Colonic mucosa (tissue), 4 donors: ENCODE measurements at regions of chr6 and their contacts with region 1.

Region 1: GRCh38 chr6:139375232-139376016 is 976 bp upstream of the CITED2 start:
- DNase-seq: peak; percentile 94
- H3K4me3 ChIP-seq: peak overlapping the region; percentile 70
- H3K27ac ChIP-seq: peak overlapping the region; percentile 97
- H3K4me1 ChIP-seq: peaks cover 10% of the 10 kb centered on the region
- H3K27me3 ChIP-seq: no peaks in the 10 kb centered on the region
- CTCF ChIP-seq: no peak

Region 2: GRCh38 chr6:138844192-138844591 is 531.2 kb before region 1 on chr6:
- intact Hi-C with region 1: no loop called
- DNase-seq: no peak
- H3K4me3 ChIP-seq: no peak overlapping the region
- H3K27ac ChIP-seq: no peak overlapping the region
- H3K4me1 ChIP-seq: no peaks in the 10 kb centered on the region
- H3K27me3 ChIP-seq: no peaks in the 10 kb centered on the region
- CTCF ChIP-seq: no peak

Region 3: GRCh38 chr6:139313784-139314545 is 61.5 kb before region 1 on chr6:
- intact Hi-C with region 1: no loop called
- DNase-seq: no peak
- H3K4me3 ChIP-seq: no peak overlapping the region
- H3K27ac ChIP-seq: no peak overlapping the region
- H3K4me1 ChIP-seq: no peaks in the 10 kb centered on the region
- H3K27me3 ChIP-seq: no peaks in the 10 kb centered on the region
- CTCF ChIP-seq: no peak

Region 4: GRCh38 chr6:139533573-139534471 is 158.4 kb after region 1 on chr6:
- intact Hi-C with region 1: loop called (anchors 5 kb)
- DNase-seq: peak; percentile 81
- H3K4me3 ChIP-seq: no peak overlapping the region
- H3K27ac ChIP-seq: peak overlapping the region; percentile 75
- H3K4me1 ChIP-seq: peaks cover 16% of the 10 kb centered on the region
- H3K27me3 ChIP-seq: no peaks in the 10 kb centered on the region
- CTCF ChIP-seq: no peak

Region 5: DNA sequence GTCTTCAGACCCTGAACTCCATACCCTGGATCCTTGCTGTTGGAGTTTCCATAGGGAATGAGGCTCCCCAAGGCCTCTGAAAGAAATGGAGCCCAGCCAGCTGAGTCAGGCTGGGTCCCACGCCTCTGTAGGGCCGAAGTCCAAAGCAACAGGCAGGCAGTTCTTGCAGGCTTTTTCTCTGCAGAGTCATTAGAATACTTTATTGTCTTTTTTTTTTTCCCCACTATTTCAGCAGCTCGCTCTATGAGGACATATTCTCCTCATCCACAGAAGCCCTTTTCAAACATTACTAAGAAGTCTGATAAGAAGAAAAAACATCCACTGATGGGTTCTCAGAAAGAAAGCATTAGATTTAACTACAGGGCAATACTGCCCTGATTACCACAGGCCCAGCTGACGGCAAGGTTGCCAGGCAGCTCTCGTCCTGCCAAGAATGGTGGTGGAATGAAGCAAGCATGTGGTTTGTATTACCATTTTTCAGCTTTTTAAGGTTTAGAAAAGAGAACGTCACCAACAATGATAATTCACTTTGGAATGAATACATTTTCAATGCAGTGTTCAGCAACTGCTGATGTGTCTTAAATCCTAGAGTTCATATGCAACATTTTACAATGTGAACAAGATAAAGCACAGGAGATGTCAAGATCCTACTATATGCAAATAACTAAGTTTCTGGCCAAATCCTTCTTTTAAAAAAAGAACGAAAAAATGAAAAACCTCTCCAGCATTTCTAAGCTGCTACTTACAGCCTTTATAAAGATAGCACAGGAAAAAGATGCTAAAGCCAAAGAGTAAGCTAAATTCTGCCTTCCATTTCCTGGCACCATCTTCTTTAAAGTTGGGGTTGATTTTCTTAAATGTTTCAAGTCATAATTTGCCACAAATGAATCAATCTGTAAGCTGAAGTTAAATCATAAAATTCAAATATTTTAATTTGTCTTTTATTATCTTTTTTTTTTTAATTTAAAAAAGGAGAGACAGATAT is 222.6 kb after region 1 on chr6:
- intact Hi-C with region 1: loop called (anchors 5 kb)
- DNase-seq: peak; percentile 90
- H3K4me3 ChIP-seq: no peak overlapping the region
- H3K27ac ChIP-seq: peak overlapping the region; percentile 86
- H3K4me1 ChIP-seq: peaks cover 6% of the 10 kb centered on the region
- H3K27me3 ChIP-seq: no peaks in the 10 kb centered on the region
- CTCF ChIP-seq: no peak

Region 6: GRCh38 chr6:139655790-139656687 is 280.6 kb after region 1 on chr6:
- intact Hi-C with region 1: loop called (anchors 5 kb)
- DNase-seq: peak; percentile 90
- H3K4me3 ChIP-seq: no peak overlapping the region
- H3K27ac ChIP-seq: peak overlapping the region; percentile 66
- H3K4me1 ChIP-seq: no peaks in the 10 kb centered on the region
- H3K27me3 ChIP-seq: no peaks in the 10 kb centered on the region
- CTCF ChIP-seq: no peak

Region 7: DNA sequence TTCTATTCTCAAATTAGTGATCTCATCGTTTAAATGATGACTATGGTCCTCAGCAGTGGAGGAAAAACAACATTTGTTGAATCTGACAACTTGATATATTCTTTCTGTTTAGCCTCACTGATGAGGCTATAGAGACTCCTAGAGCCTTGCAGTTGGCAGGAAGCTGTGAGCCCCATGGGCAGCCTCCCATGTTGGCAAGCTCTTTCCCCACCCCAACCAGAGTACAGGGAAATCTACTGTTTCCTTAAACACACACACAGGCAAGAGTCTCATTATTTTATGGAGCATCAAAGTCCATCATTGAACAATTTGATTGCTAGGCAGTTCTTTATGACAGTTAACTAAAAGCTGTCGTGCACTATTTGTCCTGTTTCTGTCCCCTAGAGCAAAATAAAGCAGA is 497.2 kb after region 1 on chr6:
- intact Hi-C with region 1: loop called (anchors 5 kb)
- DNase-seq: peak; percentile 73
- H3K4me3 ChIP-seq: no peak overlapping the region
- H3K27ac ChIP-seq: peak overlapping the region; percentile 29
- H3K4me1 ChIP-seq: peaks cover 3% of the 10 kb centered on the region
- H3K27me3 ChIP-seq: no peaks in the 10 kb centered on the region
- CTCF ChIP-seq: no peak

Region 8: DNA sequence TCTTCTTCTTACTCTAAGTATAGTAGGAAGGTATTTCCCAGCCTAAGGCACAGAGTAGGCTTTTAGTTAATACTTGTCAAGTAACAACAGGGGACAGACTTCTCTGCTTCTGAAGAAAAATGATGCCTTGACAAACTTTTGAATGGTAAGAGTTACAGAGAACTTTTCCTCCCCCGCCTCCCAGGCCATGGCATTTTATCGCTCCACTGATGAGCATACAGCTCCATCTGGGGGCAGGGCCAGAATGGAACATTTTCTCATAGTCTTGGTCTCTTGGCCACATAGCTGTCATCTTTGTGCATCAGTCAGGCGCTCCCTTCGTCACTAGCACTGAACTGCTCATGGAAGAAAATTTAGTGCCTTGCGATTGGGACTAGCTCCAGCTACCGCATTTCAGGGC is 1065.8 kb after region 1 on chr6:
- intact Hi-C with region 1: loop called (anchors 10 kb)
- DNase-seq: peak; percentile 36
- H3K4me3 ChIP-seq: no peak overlapping the region
- H3K27ac ChIP-seq: no peak overlapping the region
- H3K4me1 ChIP-seq: no peaks in the 10 kb centered on the region
- H3K27me3 ChIP-seq: no peaks in the 10 kb centered on the region
- CTCF ChIP-seq: peak; percentile 25